H1 (cell line): ENCODE measurements at regions of chr2 and their contacts with region 1.

Region 1: GRCh38 chr2:37414470-37414949 is 70.1 kb downstream of the QPCT start:
- DNase-seq: no peak
- H3K4me3 ChIP-seq: no peak overlapping the region
- H3K27ac ChIP-seq: no peak overlapping the region
- H3K4me1 ChIP-seq: no peaks in the 10 kb centered on the region
- H3K27me3 ChIP-seq: no peaks in the 10 kb centered on the region
- CTCF ChIP-seq: peak in 2 of 3 experiments; percentile 75 to 82; a peak in 3 of 4 replicates
- EP300 ChIP-seq: no peak
- POLR2A ChIP-seq: no peak
- RAD21 ChIP-seq: peak; percentile 97 to 99

Region 2: GRCh38 chr2:37397166-37397565 is 17.3 kb before region 1 on chr2:
- CTCF ChIA-PET with region 1: interaction called, 52 read pairs
- POLR2A ChIA-PET with region 1: no interaction called
- DNase-seq: no peak
- H3K4me3 ChIP-seq: no peak overlapping the region
- H3K27ac ChIP-seq: no peak overlapping the region
- H3K4me1 ChIP-seq: peaks cover 0 to 2% (median 0%) of the 10 kb centered on the region in 4 experiments; a peak in 1 of 7 replicates
- H3K27me3 ChIP-seq: no peaks in the 10 kb centered on the region
- CTCF ChIP-seq: no peak
- EP300 ChIP-seq: no peak
- POLR2A ChIP-seq: no peak
- RAD21 ChIP-seq: no peak

Region 3: DNA sequence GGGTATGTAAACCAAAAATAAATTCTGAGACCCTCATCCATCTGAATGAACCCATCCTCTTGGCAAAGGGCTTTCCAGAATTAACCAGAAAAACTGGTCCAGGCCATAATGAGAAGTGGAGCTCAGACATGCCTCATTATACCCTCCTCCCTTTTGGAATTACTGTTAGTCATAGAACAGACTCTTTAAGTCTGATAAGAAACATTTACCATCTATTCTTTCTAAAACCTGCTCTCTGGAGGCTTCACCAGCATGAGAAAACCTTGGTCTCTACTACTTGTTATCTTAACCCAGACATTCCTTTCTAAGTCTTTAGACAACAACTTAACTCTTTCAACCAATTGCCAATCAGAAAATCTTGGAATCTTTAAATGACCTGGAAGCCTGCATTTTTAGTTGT is 12.7 kb after region 1 on chr2:
- CTCF ChIA-PET with region 1: interaction called, 17 read pairs
- POLR2A ChIA-PET with region 1: no interaction called
- DNase-seq: no peak
- H3K4me3 ChIP-seq: no peak overlapping the region
- H3K27ac ChIP-seq: no peak overlapping the region
- H3K4me1 ChIP-seq: no peaks in the 10 kb centered on the region
- H3K27me3 ChIP-seq: no peaks in the 10 kb centered on the region; a peak in 1 of 7 replicates
- CTCF ChIP-seq: no peak
- EP300 ChIP-seq: no peak
- POLR2A ChIP-seq: no peak
- RAD21 ChIP-seq: no peak

Region 4: DNA sequence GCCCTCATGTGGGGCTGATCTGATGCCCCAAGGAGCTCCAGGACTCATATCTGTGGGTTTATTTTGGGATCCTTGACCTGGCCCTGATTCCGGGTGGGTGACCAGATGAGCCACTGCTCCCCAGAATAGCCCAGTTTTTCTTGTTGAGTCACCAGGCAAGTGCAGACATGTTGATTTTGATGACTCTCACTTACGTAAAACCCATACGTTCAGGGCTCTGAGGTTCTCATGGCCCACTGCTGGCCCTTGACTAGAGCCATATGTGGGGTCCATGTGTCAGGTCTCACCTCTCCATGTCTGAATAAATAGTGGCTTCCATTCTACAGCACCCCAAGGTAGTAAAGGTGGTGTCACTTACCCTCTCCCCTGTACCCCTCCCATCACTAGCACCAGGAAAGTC is 215.0 kb after region 1 on chr2:
- CTCF ChIA-PET with region 1: no interaction called
- POLR2A ChIA-PET with region 1: no interaction called
- DNase-seq: no peak
- H3K4me3 ChIP-seq: no peak overlapping the region
- H3K27ac ChIP-seq: no peak overlapping the region
- H3K4me1 ChIP-seq: no peaks in the 10 kb centered on the region
- H3K27me3 ChIP-seq: no peaks in the 10 kb centered on the region
- CTCF ChIP-seq: no peak
- EP300 ChIP-seq: no peak
- POLR2A ChIP-seq: no peak
- RAD21 ChIP-seq: no peak

Region 5: DNA sequence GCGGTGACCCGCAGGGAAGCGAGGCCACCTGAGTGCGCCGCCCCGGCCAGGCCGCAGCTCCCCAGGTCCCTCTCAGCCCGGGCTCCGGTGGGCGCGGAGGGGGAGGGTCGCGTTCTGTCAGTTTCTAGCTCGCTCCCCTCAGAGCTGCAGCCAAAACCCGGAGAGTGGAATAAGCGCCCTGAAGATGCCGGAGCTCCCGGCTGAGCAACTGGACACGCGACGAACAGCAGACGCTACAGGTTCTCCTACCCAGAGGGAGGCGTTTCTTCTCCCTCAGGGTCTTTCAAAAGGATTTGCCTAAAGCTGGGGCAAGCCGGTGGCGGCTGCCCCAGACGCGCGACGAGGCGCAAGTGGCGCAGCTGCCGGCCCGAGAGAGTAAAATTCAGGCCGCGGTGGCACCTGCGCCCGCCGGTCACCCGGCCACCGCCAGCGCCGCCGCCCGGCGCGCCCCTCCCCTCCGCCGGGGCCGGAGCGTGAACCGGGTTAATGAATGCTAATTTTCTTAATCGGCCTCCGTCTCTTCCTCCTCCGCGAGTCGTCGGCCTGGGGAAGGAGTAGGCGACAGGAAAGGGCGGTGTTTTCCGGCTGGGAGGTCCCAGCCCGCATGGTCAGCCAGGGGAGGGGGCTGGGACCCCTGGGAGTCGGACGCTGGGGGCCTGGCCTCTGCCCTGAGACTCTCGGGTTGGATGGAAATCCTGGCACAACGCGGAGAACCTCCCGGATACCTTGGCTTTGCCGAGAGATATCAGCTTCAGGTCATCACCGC is 257.8 kb after region 1 on chr2:
- CTCF ChIA-PET with region 1: interaction called, 12 read pairs
- POLR2A ChIA-PET with region 1: no interaction called
- DNase-seq: peak; percentile 91 to 94
- H3K4me3 ChIP-seq: peak overlapping the region; percentile 77 to 98 (median 82)
- H3K27ac ChIP-seq: peak overlapping the region; percentile 65
- H3K4me1 ChIP-seq: peaks cover 2 to 17% (median 11%) of the 10 kb centered on the region in 4 experiments; a peak in 6 of 7 replicates
- H3K27me3 ChIP-seq: no peaks in the 10 kb centered on the region
- CTCF ChIP-seq: no peak
- EP300 ChIP-seq: no peak
- POLR2A ChIP-seq: no peak
- RAD21 ChIP-seq: peak; percentile 2 to 25; a peak in 3 of 4 replicates

Region 6: GRCh38 chr2:37877457-37878315 is 463.2 kb after region 1 on chr2:
- CTCF ChIA-PET with region 1: interaction called, 81 read pairs
- POLR2A ChIA-PET with region 1: no interaction called
- DNase-seq: no peak
- H3K4me3 ChIP-seq: no peak overlapping the region
- H3K27ac ChIP-seq: no peak overlapping the region
- H3K4me1 ChIP-seq: peaks cover 4 to 9% (median 4%) of the 10 kb centered on the region in 4 experiments; a peak in 5 of 7 replicates
- H3K27me3 ChIP-seq: no peaks in the 10 kb centered on the region
- CTCF ChIP-seq: peak in 2 of 3 experiments; percentile 55 to 56; a peak in 2 of 4 replicates
- EP300 ChIP-seq: no peak
- POLR2A ChIP-seq: no peak
- RAD21 ChIP-seq: peak; percentile 88 to 91